ENCODE measurements at regions of chr20 and their contacts with region 1.

Region 1: GRCh38 chr20:50115591-50116372 is 2.8 kb upstream of the UBE2V1 start:
- DNase-seq: peak; percentile 99
- H3K4me3 ChIP-seq: peak overlapping the region; percentile 29 to 55 (median 50)
- H3K27ac ChIP-seq: peak overlapping the region; percentile 81 to 99 (median 91)
- H3K4me1 ChIP-seq: peaks cover 0 to 43% (median 36%) of the 10 kb centered on the region in 4 donors
- H3K27me3 ChIP-seq: no peaks in the 10 kb centered on the region
- CTCF ChIP-seq: no peak
- EP300 ChIP-seq: peak in 1 of 4 donors; percentile 53
- POLR2A ChIP-seq: no peak

Region 2: GRCh38 chr20:50172347-50173013 is 56.7 kb after region 1 on chr20:
- intact Hi-C with region 1: no loop called
- DNase-seq: peak; percentile 96
- H3K4me3 ChIP-seq: peak overlapping the region; percentile 39 to 61 (median 56)
- H3K27ac ChIP-seq: peak overlapping the region; percentile 84 to 91 (median 88)
- H3K4me1 ChIP-seq: peaks cover 0 to 26% (median 17%) of the 10 kb centered on the region in 4 donors
- H3K27me3 ChIP-seq: no peaks in the 10 kb centered on the region
- CTCF ChIP-seq: no peak
- EP300 ChIP-seq: no peak
- POLR2A ChIP-seq: peak; percentile 66 to 73

Region 3: DNA sequence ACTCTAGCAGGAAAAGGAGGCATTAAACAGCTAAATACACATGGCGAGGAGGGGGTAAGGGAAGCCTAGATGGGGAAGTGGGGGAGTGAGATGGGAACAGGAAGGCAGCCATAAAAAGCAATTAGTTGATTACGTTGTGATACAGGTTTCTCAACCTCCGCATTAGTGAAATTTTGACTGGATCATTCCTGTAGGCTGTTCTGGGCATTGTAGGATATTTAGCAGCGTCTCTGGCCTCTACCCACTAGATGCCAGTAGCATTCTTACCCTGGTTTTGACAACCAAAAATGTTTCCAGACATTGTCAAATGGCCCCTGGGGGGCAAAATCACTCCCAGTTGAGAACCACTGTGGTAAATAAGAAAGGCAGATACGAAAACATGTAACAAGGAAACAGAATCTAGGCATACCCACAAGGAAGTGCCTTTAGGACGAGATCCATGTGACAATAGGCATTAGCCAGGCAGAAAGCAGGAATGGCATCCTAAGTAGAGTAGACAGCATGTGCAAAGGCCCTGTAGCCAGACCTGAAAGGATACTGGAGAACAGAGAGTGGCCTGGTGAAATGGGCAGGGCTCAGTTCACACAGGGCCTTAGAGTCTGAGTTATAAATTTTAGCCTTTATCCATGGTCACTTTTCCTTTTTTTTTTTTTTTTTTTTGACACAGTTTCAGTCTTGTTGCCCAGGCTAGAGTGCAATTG is 368.6 kb after region 1 on chr20:
- intact Hi-C with region 1: loop called (anchors 10 kb)
- DNase-seq: no peak
- H3K4me3 ChIP-seq: peak overlapping the region in 3 of 4 donors; percentile 52 to 57 (median 52)
- H3K27ac ChIP-seq: peak overlapping the region; percentile 83 to 88 (median 84)
- H3K4me1 ChIP-seq: peaks cover 0 to 14% (median 8%) of the 10 kb centered on the region in 4 donors
- H3K27me3 ChIP-seq: no peaks in the 10 kb centered on the region
- CTCF ChIP-seq: no peak
- EP300 ChIP-seq: no peak
- POLR2A ChIP-seq: no peak

Measured in sigmoid colon (tissue), 7 donors.